ENCODE measurements at regions of chr12 and their contacts with region 1.

Region 1: GRCh38 chr12:6278439-6279255 is 31.8 kb upstream of the PLEKHG6 start:
- DNase-seq: peak; percentile 78 to 96 (median 89)
- H3K4me3 ChIP-seq: peak overlapping the region; percentile 6 to 56 (median 12)
- H3K27ac ChIP-seq: peak overlapping the region; percentile 74 to 94
- H3K4me1 ChIP-seq: peaks cover 2 to 26% (median 13%) of the 10 kb centered on the region in 3 donors
- H3K27me3 ChIP-seq: no peaks in the 10 kb centered on the region
- CTCF ChIP-seq: peak; percentile 93

Region 2: GRCh38 chr12:6062757-6063735 is 215.6 kb before region 1 on chr12:
- intact Hi-C with region 1: loop called (anchors 5 kb)
- DNase-seq: peak in 4 of 5 donors; percentile 63 to 84 (median 73)
- H3K4me3 ChIP-seq: no peak overlapping the region
- H3K27ac ChIP-seq: no peak overlapping the region
- H3K4me1 ChIP-seq: peaks cover 2 to 6% (median 4%) of the 10 kb centered on the region in 3 donors
- H3K27me3 ChIP-seq: no peaks in the 10 kb centered on the region
- CTCF ChIP-seq: peak; percentile 90

Region 3: DNA sequence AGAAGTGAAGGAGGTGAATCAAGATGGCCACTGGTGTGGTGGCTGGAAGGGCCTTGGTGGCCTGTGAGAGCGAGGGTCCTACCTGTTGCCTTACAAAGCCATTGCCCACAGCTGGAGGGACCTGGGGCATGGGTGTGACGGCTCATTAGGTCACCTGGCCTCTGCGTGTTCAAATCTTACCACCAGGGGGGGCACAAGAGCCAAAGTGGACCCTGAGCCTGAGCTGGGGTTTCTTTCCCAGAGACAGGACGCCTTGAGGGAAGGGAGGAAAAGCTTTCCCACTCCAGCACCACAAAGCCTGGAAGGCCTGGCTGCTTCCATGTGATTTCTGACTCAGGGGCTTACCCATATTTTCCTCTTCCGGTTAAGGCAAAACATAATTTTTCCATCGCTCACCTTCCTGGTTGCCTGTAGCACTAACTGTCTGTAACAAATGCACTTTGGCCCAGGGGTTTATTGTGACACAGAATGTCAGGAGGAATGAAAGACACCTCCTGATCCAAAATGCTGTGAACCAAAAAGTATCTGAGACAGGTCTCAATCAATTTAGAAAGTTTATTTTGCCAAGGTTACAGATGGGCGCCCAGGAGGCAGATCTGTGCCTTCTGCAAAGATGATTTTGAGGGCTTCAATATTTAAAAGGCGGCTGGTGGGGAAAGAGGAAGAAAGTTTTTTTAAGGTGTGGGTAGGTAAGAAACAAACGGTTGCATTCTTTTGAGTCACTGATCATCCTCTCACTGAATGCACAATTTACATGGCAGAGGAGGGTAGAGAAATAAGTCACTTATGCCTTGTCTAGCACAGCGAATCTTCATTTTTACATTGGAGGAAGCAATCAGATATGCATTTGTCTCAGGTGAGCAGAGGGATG is 82.7 kb before region 1 on chr12:
- intact Hi-C with region 1: loop called (anchors 5 kb)
- DNase-seq: peak; percentile 89 to 95 (median 95)
- H3K4me3 ChIP-seq: no peak overlapping the region
- H3K27ac ChIP-seq: peak overlapping the region; percentile 44 to 78
- H3K4me1 ChIP-seq: peaks cover 0 to 4% (median 0%) of the 10 kb centered on the region in 3 donors
- H3K27me3 ChIP-seq: no peaks in the 10 kb centered on the region
- CTCF ChIP-seq: peak; percentile 96

Measured in kidney (tissue), 22 donors.